Caco-2 (cell line): ENCODE measurements at regions of chr2 and their contacts with region 1.

Region 1: DNA sequence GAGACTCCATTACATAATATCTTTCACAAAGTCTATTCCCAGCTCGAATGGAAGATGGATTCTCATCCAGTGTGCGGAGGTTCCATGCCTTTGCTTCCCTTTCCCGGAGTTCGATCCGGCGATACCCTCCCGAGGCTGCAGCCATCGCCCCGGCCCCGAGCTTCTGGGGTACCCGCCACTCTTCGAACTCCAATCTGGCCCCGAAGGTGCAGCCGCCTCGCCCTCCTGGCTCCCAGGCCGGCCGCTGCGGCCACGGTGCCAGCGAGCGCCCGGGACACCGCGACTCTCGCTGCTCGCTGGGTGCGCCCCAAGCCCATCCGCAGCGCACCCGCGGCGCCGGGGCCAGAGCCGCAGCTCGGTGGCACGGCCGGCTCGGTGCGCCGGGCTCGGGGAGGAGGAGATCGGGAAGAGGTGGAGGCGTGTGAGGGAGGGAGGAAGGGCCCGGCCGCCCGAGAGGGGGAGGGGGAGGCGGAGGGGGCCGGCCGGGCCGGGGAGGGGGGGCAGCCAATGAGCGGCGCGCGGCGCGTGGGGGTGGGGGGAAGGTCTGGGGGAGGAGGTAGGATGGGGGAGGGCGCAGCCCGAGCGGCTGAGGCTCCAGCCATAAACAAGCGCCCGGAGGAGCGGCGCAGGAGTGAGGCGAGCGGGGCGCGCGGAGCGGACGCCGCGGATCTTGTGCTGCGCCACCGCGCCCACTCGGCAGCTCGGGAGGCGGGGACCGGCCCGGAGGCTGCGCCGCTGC is at the start of gene CRIM1:
- DNase-seq: peak; percentile 89 to 91
- H3K4me3 ChIP-seq: peak within 1 kb of the TSS; percentile 97
- H3K4me3 Mint-ChIP-seq: peak within 1 kb of the TSS; percentile 97
- H3K27ac Mint-ChIP-seq: peak within 1 kb of the TSS; percentile 93
- H3K4me1 ChIP-seq: peaks cover 48% of the 10 kb centered on the region
- H3K4me1 Mint-ChIP-seq: peaks cover 56% of the 10 kb centered on the region
- H3K27me3 ChIP-seq: no peaks in the 10 kb centered on the region
- H3K27me3 Mint-ChIP-seq: no peaks in the 10 kb centered on the region
- CTCF ChIP-seq: no peak
- total RNA-seq, gene CRIM1: 270 and 292 TPM in 2 replicates

Region 2: DNA sequence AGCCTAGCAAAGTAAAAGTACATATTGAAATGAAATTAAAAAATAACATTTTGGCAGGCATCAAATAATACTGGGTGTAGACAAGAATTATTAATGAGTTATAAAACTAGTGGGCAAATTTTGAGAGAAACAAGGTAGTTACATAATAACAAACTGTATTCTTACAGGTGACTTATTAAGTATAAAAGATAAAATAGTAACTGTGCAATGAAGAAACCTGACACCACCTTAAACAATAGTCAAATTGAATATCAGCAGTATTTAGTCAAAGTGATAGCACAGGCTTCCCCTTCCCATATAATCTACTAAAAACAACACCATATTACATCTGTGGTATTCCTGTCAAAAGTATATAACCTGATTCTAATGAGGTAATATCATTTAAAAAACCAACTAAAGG is 1099.5 kb before region 1 on chr2:
- CTCF ChIA-PET with region 1: no interaction called
- POLR2A ChIA-PET with region 1: no interaction called
- intact Hi-C with region 1: no loop called
- DNase-seq: no peak
- H3K4me3 ChIP-seq: no peak overlapping the region
- H3K4me3 Mint-ChIP-seq: no peak overlapping the region
- H3K27ac Mint-ChIP-seq: no peak overlapping the region
- H3K4me1 ChIP-seq: no peaks in the 10 kb centered on the region
- H3K4me1 Mint-ChIP-seq: no peaks in the 10 kb centered on the region
- H3K27me3 ChIP-seq: no peaks in the 10 kb centered on the region
- H3K27me3 Mint-ChIP-seq: no peaks in the 10 kb centered on the region
- CTCF ChIP-seq: no peak

Region 3: GRCh38 chr2:36367895-36368353 is 12.6 kb after region 1 on chr2:
- CTCF ChIA-PET with region 1: interaction called, 4 read pairs
- POLR2A ChIA-PET with region 1: interaction called, 3 read pairs
- intact Hi-C with region 1: loop called (anchors 1 kb)
- DNase-seq: no peak
- H3K4me3 ChIP-seq: peak overlapping the region; percentile 17; the same call in 1 of the 2 replicates
- H3K4me3 Mint-ChIP-seq: peak overlapping the region; percentile 49
- H3K27ac Mint-ChIP-seq: peak overlapping the region; percentile 65
- H3K4me1 ChIP-seq: peaks cover 97% of the 10 kb centered on the region
- H3K4me1 Mint-ChIP-seq: peaks cover 80% of the 10 kb centered on the region
- H3K27me3 ChIP-seq: no peaks in the 10 kb centered on the region
- H3K27me3 Mint-ChIP-seq: no peaks in the 10 kb centered on the region
- CTCF ChIP-seq: no peak

Region 4: GRCh38 chr2:36507408-36507812 is 152.1 kb after region 1 on chr2:
- CTCF ChIA-PET with region 1: interaction called, 3 read pairs
- POLR2A ChIA-PET with region 1: no interaction called
- intact Hi-C with region 1: loop called (anchors 1 kb)
- DNase-seq: peak; percentile 70 to 79
- H3K4me3 ChIP-seq: no peak overlapping the region
- H3K4me3 Mint-ChIP-seq: no peak overlapping the region
- H3K27ac Mint-ChIP-seq: peak overlapping the region; percentile 79
- H3K4me1 ChIP-seq: peaks cover 33% of the 10 kb centered on the region
- H3K4me1 Mint-ChIP-seq: peaks cover 34% of the 10 kb centered on the region
- H3K27me3 ChIP-seq: no peaks in the 10 kb centered on the region
- H3K27me3 Mint-ChIP-seq: no peaks in the 10 kb centered on the region
- CTCF ChIP-seq: peak; percentile 56 to 89